OCI-LY7 (cell line): ENCODE measurements at regions of chr9 and their contacts with region 1.

Region 1: GRCh38 chr9:5529683-5530221 is 19.4 kb downstream of the PDCD1LG2 start:
- DNase-seq: peak; percentile 76
- H3K4me3 ChIP-seq: peak overlapping the region; percentile 48
- H3K27ac ChIP-seq: peak overlapping the region; percentile 48
- H3K4me1 ChIP-seq: peaks cover 42% of the 10 kb centered on the region
- CTCF ChIP-seq: no peak

Region 2: DNA sequence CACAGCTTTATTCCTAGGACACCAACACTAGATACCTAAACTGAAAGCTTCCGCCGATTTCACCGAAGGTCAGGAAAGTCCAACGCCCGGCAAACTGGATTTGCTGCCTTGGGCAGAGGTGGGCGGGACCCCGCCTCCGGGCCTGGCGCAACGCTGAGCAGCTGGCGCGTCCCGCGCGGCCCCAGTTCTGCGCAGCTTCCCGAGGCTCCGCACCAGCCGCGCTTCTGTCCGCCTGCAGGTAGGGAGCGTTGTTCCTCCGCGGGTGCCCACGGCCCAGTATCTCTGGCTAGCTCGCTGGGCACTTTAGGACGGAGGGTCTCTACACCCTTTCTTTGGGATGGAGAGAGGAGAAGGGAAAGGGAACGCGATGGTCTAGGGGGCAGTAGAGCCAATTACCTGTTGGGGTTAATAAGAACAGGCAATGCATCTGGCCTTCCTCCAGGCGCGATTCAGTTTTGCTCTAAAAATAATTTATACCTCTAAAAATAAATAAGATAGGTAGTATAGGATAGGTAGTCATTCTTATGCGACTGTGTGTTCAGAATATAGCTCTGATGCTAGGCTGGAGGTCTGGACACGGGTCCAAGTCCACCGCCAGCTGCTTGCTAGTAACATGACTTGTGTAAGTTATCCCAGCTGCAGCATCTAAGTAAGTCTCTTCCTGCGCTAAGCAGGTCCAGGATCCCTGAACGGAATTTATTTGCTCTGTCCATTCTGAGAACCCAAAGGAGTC is 79.2 kb before region 1 on chr9 and contains the start of gene CD274:
- CTCF ChIA-PET with region 1: no interaction called
- POLR2A ChIA-PET with region 1: interaction called, 4 read pairs
- intact Hi-C with region 1: loop called (anchors 2 kb)
- DNase-seq: peak; percentile 74
- H3K4me3 ChIP-seq: peak within 1 kb of the TSS; percentile 71
- H3K27ac ChIP-seq: no peak within 1 kb of the TSS
- H3K4me1 ChIP-seq: peaks cover 25% of the 10 kb centered on the region
- CTCF ChIP-seq: peak; percentile 81
- total RNA-seq, gene CD274: 0.57 and 4.3 TPM in 2 replicates

Region 3: GRCh38 chr9:5549658-5550310 is 20.0 kb after region 1 on chr9:
- CTCF ChIA-PET with region 1: no interaction called
- POLR2A ChIA-PET with region 1: interaction called, 12 read pairs
- intact Hi-C with region 1: no loop called
- DNase-seq: no peak
- H3K4me3 ChIP-seq: no peak overlapping the region
- H3K27ac ChIP-seq: no peak overlapping the region
- H3K4me1 ChIP-seq: no peaks in the 10 kb centered on the region
- CTCF ChIP-seq: no peak

Region 4: GRCh38 chr9:5582835-5583195 is 53.1 kb after region 1 on chr9:
- CTCF ChIA-PET with region 1: interaction called, 3 read pairs
- POLR2A ChIA-PET with region 1: interaction called, 16 read pairs
- intact Hi-C with region 1: no loop called
- DNase-seq: peak; percentile 63
- H3K4me3 ChIP-seq: no peak overlapping the region
- H3K27ac ChIP-seq: no peak overlapping the region
- H3K4me1 ChIP-seq: peaks cover 33% of the 10 kb centered on the region
- CTCF ChIP-seq: no peak

Region 5: DNA sequence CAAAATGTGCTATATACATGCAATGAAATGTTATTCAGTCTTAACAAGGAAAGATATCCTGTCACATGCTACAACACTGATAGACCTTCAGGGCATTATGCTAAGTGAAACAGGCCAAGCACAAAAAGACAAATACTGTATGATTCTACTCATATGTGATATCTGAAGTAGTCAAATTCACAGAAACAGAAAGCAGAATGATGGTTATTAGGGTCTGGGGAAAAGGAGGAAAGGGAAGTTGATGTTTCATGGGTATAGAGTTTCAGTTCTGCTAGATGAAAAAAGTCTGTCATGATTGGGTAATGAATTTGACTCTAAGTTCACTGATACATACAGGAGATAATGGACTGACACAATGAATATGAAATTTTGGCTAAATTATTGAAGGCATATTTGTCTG is 88.0 kb after region 1 on chr9:
- CTCF ChIA-PET with region 1: no interaction called
- POLR2A ChIA-PET with region 1: no interaction called
- intact Hi-C with region 1: no loop called
- DNase-seq: peak; percentile 79
- H3K4me3 ChIP-seq: peak overlapping the region; percentile 55
- H3K27ac ChIP-seq: peak overlapping the region; percentile 85
- H3K4me1 ChIP-seq: peaks cover 36% of the 10 kb centered on the region
- CTCF ChIP-seq: no peak